ENCODE measurements at regions of chr3 and their contacts with region 1.

Region 1: DNA sequence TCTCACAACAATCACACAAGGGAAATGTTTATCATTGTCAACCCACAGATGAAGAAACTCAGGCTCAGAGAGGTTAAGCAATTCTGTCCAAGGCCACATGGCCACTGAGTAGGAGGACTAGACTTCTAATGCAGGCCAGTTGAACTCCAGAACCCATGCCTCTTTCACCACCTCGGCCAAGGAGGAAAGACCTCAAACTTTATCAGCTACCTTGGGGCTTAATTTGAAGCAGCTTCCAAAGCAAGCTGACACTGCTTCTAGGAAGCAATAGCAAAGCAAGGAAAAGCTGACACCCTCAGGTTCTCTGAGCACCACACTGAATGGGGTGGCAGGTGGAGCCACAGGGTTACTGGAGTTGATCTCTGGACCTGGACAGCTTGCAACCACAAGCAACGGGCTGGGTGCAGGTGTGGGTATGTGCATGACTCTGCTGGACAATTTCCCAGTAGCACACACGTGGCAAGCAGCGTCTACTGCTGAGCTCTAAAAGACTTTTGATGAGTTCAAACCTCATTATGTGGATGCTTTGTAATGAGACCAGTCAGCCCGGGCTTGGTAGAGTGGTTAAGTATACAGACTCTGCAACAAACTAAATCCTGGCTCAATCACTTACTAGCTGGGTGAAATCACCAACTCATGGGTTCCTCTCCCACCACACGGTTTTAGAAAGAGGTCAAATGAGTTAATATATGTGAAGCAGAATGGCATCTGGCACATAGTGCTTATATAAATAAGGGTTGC is 23.1 kb downstream of the CCNL1 start:
- DNase-seq: no peak
- H3K4me3 ChIP-seq: no peak overlapping the region
- H3K4me3 Mint-ChIP-seq: peak overlapping the region in 1 of 8 donors; percentile 81
- H3K27ac ChIP-seq: no peak overlapping the region
- H3K27ac Mint-ChIP-seq: peak overlapping the region in 5 of 7 donors; percentile 30 to 66 (median 61)
- H3K4me1 ChIP-seq: peaks cover 42% of the 10 kb centered on the region
- H3K4me1 Mint-ChIP-seq: peaks cover 19 to 47% (median 38%) of the 10 kb centered on the region in 4 donors
- H3K27me3 ChIP-seq: no peaks in the 10 kb centered on the region
- H3K27me3 Mint-ChIP-seq: no peaks in the 10 kb centered on the region

Region 2: GRCh38 chr3:156040041-156040440 is 1096.8 kb before region 1 on chr3:
- CTCF ChIA-PET with region 1: interaction called, 9 read pairs
- POLR2A ChIA-PET with region 1: no interaction called
- intact Hi-C with region 1: loop called (anchors 2 kb)
- DNase-seq: no peak
- H3K4me3 ChIP-seq: no peak overlapping the region
- H3K4me3 Mint-ChIP-seq: no peak overlapping the region
- H3K27ac ChIP-seq: no peak overlapping the region
- H3K27ac Mint-ChIP-seq: no peak overlapping the region
- H3K4me1 ChIP-seq: no peaks in the 10 kb centered on the region
- H3K4me1 Mint-ChIP-seq: peaks cover 0 to 2% (median under 1%) of the 10 kb centered on the region in 4 donors
- H3K27me3 ChIP-seq: no peaks in the 10 kb centered on the region
- H3K27me3 Mint-ChIP-seq: peaks cover 2 to 5% of the 10 kb centered on the region in 2 donors

Region 3: GRCh38 chr3:156525808-156526207 is 611.0 kb before region 1 on chr3:
- CTCF ChIA-PET with region 1: interaction called, 13 read pairs
- POLR2A ChIA-PET with region 1: interaction called, 3 read pairs
- intact Hi-C with region 1: no loop called
- DNase-seq: no peak
- H3K4me3 ChIP-seq: no peak overlapping the region
- H3K4me3 Mint-ChIP-seq: peak overlapping the region in 1 of 8 donors; percentile 24
- H3K27ac ChIP-seq: no peak overlapping the region
- H3K27ac Mint-ChIP-seq: no peak overlapping the region
- H3K4me1 ChIP-seq: peaks cover 6% of the 10 kb centered on the region
- H3K4me1 Mint-ChIP-seq: peaks cover 12 to 17% (median 14%) of the 10 kb centered on the region in 4 donors
- H3K27me3 ChIP-seq: no peaks in the 10 kb centered on the region
- H3K27me3 Mint-ChIP-seq: peaks cover 7 to 8% of the 10 kb centered on the region in 2 donors

Region 4: GRCh38 chr3:156674046-156674910 is 462.5 kb before region 1 on chr3 and contains the start of gene TIPARP:
- CTCF ChIA-PET with region 1: interaction called, 48 read pairs
- POLR2A ChIA-PET with region 1: interaction called, 40 read pairs
- intact Hi-C with region 1: loop called (anchors 1 kb)
- DNase-seq: peak; percentile 97 to 100 (median 99)
- H3K4me3 ChIP-seq: peak within 1 kb of the TSS; percentile 76 to 91
- H3K4me3 Mint-ChIP-seq: peak within 1 kb of the TSS; percentile 93 to 99 (median 96)
- H3K27ac ChIP-seq: peak within 1 kb of the TSS; percentile 94
- H3K27ac Mint-ChIP-seq: peak within 1 kb of the TSS; percentile 95 to 100 (median 99)
- H3K4me1 ChIP-seq: peaks cover 43% of the 10 kb centered on the region
- H3K4me1 Mint-ChIP-seq: peaks cover 32 to 46% (median 37%) of the 10 kb centered on the region in 4 donors
- H3K27me3 ChIP-seq: no peaks in the 10 kb centered on the region
- H3K27me3 Mint-ChIP-seq: no peaks in the 10 kb centered on the region
- total RNA-seq, gene TIPARP: 108 to 119 TPM

Region 5: GRCh38 chr3:156902916-156903315 is 233.9 kb before region 1 on chr3:
- CTCF ChIA-PET with region 1: no interaction called
- POLR2A ChIA-PET with region 1: no interaction called
- intact Hi-C with region 1: no loop called
- DNase-seq: no peak
- H3K4me3 ChIP-seq: no peak overlapping the region
- H3K4me3 Mint-ChIP-seq: no peak overlapping the region
- H3K27ac ChIP-seq: no peak overlapping the region
- H3K27ac Mint-ChIP-seq: no peak overlapping the region
- H3K4me1 ChIP-seq: no peaks in the 10 kb centered on the region
- H3K4me1 Mint-ChIP-seq: no peaks in the 10 kb centered on the region
- H3K27me3 ChIP-seq: no peaks in the 10 kb centered on the region
- H3K27me3 Mint-ChIP-seq: peaks cover 0 to 3% of the 10 kb centered on the region in 2 donors

Region 6: GRCh38 chr3:157088601-157089454 is 48.0 kb before region 1 on chr3:
- CTCF ChIA-PET with region 1: interaction called, 346 read pairs
- POLR2A ChIA-PET with region 1: interaction called, 104 read pairs
- intact Hi-C with region 1: no loop called
- DNase-seq: peak; percentile 94 to 95 (median 94)
- H3K4me3 ChIP-seq: peak overlapping the region; percentile 49 to 76
- H3K4me3 Mint-ChIP-seq: peak overlapping the region; percentile 79 to 93 (median 89)
- H3K27ac ChIP-seq: peak overlapping the region; percentile 91
- H3K27ac Mint-ChIP-seq: peak overlapping the region; percentile 99 to 100 (median 99)
- H3K4me1 ChIP-seq: peaks cover 41% of the 10 kb centered on the region
- H3K4me1 Mint-ChIP-seq: peaks cover 30 to 50% (median 41%) of the 10 kb centered on the region in 4 donors
- H3K27me3 ChIP-seq: no peaks in the 10 kb centered on the region
- H3K27me3 Mint-ChIP-seq: no peaks in the 10 kb centered on the region

Region 7: GRCh38 chr3:157122116-157122515 is 14.7 kb before region 1 on chr3:
- CTCF ChIA-PET with region 1: interaction called, 33 read pairs
- POLR2A ChIA-PET with region 1: interaction called, 3 read pairs
- intact Hi-C with region 1: no loop called
- DNase-seq: no peak
- H3K4me3 ChIP-seq: no peak overlapping the region
- H3K4me3 Mint-ChIP-seq: no peak overlapping the region
- H3K27ac ChIP-seq: no peak overlapping the region
- H3K27ac Mint-ChIP-seq: peak overlapping the region in 2 of 7 donors; percentile 33 to 38
- H3K4me1 ChIP-seq: peaks cover 8% of the 10 kb centered on the region
- H3K4me1 Mint-ChIP-seq: peaks cover 6 to 11% (median 8%) of the 10 kb centered on the region in 4 donors
- H3K27me3 ChIP-seq: no peaks in the 10 kb centered on the region
- H3K27me3 Mint-ChIP-seq: no peaks in the 10 kb centered on the region

Region 8: GRCh38 chr3:157174649-157175498 is 38.1 kb after region 1 on chr3:
- CTCF ChIA-PET with region 1: interaction called, 7 read pairs
- POLR2A ChIA-PET with region 1: interaction called, 3 read pairs
- intact Hi-C with region 1: loop called (anchors 2 kb)
- DNase-seq: peak; percentile 95 to 99 (median 99)
- H3K4me3 ChIP-seq: peak overlapping the region; percentile 82 to 95
- H3K4me3 Mint-ChIP-seq: peak overlapping the region; percentile 85 to 96 (median 93)
- H3K27ac ChIP-seq: peak overlapping the region; percentile 94
- H3K27ac Mint-ChIP-seq: peak overlapping the region; percentile 94 to 99 (median 98)
- H3K4me1 ChIP-seq: peaks cover 22% of the 10 kb centered on the region
- H3K4me1 Mint-ChIP-seq: peaks cover 10 to 30% (median 21%) of the 10 kb centered on the region in 4 donors
- H3K27me3 ChIP-seq: no peaks in the 10 kb centered on the region
- H3K27me3 Mint-ChIP-seq: no peaks in the 10 kb centered on the region

Measured in CD4-positive, alpha-beta memory T cell (primary cell).